Adrenal gland (tissue), 19 donors: ENCODE measurements at regions of chr4 and their contacts with region 1.

Region 1: GRCh38 chr4:83639849-83640493 is 104.1 kb downstream of the GPAT3 start:
- DNase-seq: peak; percentile 42 to 81 (median 70)
- H3K4me3 ChIP-seq: no peak overlapping the region
- H3K27ac ChIP-seq: no peak overlapping the region
- H3K4me1 ChIP-seq: no peaks in the 10 kb centered on the region
- H3K27me3 ChIP-seq: no peaks in the 10 kb centered on the region
- CTCF ChIP-seq: peak; percentile 73 to 89 (median 84)
- POLR2A ChIP-seq: no peak

Region 2: GRCh38 chr4:83504986-83505385 is 135.0 kb before region 1 on chr4:
- intact Hi-C with region 1: loop called (anchors 5 kb)
- DNase-seq: no peak
- H3K4me3 ChIP-seq: no peak overlapping the region
- H3K27ac ChIP-seq: no peak overlapping the region
- H3K4me1 ChIP-seq: no peaks in the 10 kb centered on the region
- H3K27me3 ChIP-seq: no peaks in the 10 kb centered on the region
- CTCF ChIP-seq: no peak
- POLR2A ChIP-seq: no peak

Region 3: DNA sequence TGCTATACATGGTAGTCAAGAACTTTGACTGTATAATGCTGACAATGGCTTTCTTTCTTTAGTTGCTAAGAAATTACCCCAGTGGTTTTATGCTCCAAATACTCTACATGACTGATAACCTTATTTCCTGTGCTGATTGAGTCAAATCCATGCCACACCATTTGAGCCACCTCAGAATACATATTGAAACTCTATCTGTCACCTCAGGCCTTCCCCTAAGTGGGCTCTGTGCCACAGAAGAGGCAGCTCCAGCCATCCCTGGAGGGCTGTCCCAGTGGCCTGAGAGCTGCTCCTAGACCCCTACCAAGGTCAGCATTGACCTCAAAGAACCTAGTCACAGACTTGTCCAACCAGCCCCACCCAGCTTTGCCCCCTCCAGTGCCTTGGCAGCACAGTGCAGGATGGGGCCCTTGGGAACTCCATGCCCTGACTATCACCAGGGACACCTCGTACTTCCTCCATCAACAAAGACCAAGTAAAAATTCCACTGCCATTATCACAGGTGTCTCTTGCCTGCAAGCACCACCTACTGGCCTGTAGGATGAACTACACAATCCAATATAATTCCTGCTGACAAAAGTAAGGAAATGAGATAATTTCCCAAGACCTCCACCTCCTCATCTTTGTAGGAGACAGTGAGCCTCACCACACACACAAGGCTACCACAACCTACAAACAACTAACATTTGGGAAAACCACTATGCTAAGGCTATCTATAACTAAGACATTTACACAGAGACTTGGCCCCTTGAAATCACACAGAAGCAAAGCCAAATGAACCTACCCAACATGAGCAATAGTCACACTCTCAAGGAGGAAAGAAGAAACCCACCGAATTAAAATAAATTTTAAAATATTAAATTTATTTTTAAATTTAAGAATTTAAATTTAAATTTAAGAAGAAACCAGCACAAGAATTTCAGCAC is 619.2 kb after region 1 on chr4:
- intact Hi-C with region 1: loop called in 1 of 2 experiments (anchors 10 kb)
- DNase-seq: peak in 3 of 7 donors; percentile 13 to 28 (median 16)
- H3K4me3 ChIP-seq: no peak overlapping the region
- H3K27ac ChIP-seq: no peak overlapping the region
- H3K4me1 ChIP-seq: no peaks in the 10 kb centered on the region
- H3K27me3 ChIP-seq: no peaks in the 10 kb centered on the region
- CTCF ChIP-seq: peak; percentile 33 to 67 (median 57)
- POLR2A ChIP-seq: no peak

Region 4: GRCh38 chr4:84503495-84504437 is 863.8 kb after region 1 on chr4:
- intact Hi-C with region 1: loop called (anchors 10 kb)
- DNase-seq: peak in 1 of 7 donors; percentile 29
- H3K4me3 ChIP-seq: no peak overlapping the region
- H3K27ac ChIP-seq: no peak overlapping the region
- H3K4me1 ChIP-seq: peaks cover 8 to 12% of the 10 kb centered on the region in 2 donors
- H3K27me3 ChIP-seq: peaks cover 91% of the 10 kb centered on the region
- CTCF ChIP-seq: peak; percentile 30 to 62 (median 44)
- POLR2A ChIP-seq: no peak

Region 5: GRCh38 chr4:84530871-84531270 is 890.9 kb after region 1 on chr4:
- intact Hi-C with region 1: loop called in 1 of 2 experiments (anchors 10 kb)
- DNase-seq: no peak
- H3K4me3 ChIP-seq: no peak overlapping the region
- H3K27ac ChIP-seq: no peak overlapping the region
- H3K4me1 ChIP-seq: no peaks in the 10 kb centered on the region
- H3K27me3 ChIP-seq: no peaks in the 10 kb centered on the region
- CTCF ChIP-seq: no peak
- POLR2A ChIP-seq: no peak